K562 (cell line): ENCODE measurements at regions of chr14 and their contacts with region 1.

Region 1: DNA sequence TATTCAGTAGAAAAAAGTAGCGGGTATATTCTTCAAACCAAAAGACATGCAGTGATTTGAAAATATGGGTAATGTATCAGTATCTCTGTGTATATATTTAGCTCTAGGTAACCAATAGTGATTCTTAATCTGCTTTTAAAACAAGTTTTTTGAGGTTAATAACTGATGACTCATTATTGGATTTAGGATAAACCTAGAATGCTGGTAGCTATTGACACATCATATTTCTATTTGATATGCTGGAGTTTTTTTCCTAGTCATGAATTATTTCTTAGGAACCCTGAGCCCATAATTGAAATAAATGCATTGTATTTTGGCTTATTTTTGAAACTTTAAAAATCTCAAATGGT is 15.5 kb downstream of the ARF6 start:
- DNase-seq: no peak
- ATAC-seq: no peak
- H3K4me3 ChIP-seq: no peak overlapping the region
- H3K27ac ChIP-seq: no peak overlapping the region
- H3K4me1 ChIP-seq: peaks cover 0 to 5% of the 10 kb centered on the region in 2 experiments; a peak in 2 of 5 replicates
- H3K27me3 ChIP-seq: no peaks in the 10 kb centered on the region
- CTCF ChIP-seq: no peak
- EP300 ChIP-seq: no peak
- POLR2A ChIP-seq: no peak
- RAD21 ChIP-seq: no peak

Region 2: DNA sequence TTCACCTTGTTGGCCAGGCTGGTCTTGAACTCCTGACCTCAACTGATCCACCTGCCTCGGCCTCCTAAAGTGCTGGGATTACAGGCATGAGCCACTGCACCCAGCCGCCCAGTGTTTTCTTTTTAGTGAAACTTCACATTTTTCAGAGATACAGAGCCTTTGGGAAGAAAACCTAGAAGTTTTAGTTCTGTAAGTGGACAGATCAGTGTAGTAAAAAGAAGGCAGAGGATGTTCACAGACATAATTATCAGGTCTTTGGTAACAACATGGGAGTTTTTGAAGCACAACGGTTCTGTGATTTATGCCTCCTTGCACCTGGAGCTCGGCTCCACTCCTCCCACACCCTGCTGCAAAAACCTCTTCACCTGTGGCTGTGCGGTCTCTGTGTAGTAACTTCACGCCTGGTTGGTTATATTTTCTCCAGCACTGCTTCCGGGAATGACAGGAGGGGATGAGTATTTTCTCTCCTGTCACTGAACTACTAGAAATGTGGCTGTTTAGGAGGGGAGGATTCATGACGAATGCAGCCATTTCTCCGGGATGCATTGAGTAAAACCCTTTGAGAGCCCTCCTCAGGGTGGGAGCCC is 51.5 kb after region 1 on chr14:
- CTCF ChIA-PET with region 1: no interaction called
- POLR2A ChIA-PET with region 1: no interaction called
- in situ Hi-C with region 1: loop called (anchors 5 kb)
- intact Hi-C with region 1: no loop called
- DNase-seq: no peak
- ATAC-seq: no peak
- H3K4me3 ChIP-seq: no peak overlapping the region
- H3K27ac ChIP-seq: no peak overlapping the region
- H3K4me1 ChIP-seq: peaks cover 0 to 20% of the 10 kb centered on the region in 2 experiments; a peak in 4 of 5 replicates
- H3K27me3 ChIP-seq: no peaks in the 10 kb centered on the region
- CTCF ChIP-seq: no peak
- EP300 ChIP-seq: no peak
- POLR2A ChIP-seq: no peak
- RAD21 ChIP-seq: no peak